Heart right ventricle (tissue), 16 donors: ENCODE measurements at regions of chr16 and their contacts with region 1.

Region 1: GRCh38 chr16:88662843-88663606 is at the start of gene MVD:
- DNase-seq: peak; percentile 97
- ATAC-seq: peak; percentile 98 to 100 (median 99)
- H3K4me3 ChIP-seq: peak within 1 kb of the TSS; percentile 68 to 99 (median 90)
- H3K27ac ChIP-seq: peak within 1 kb of the TSS; percentile 59 to 93 (median 88)
- H3K4me1 ChIP-seq: peaks cover 2 to 45% (median 30%) of the 10 kb centered on the region in 9 donors
- H3K27me3 ChIP-seq: no peaks in the 10 kb centered on the region
- CTCF ChIP-seq: peak in 3 of 9 donors; percentile 11 to 17 (median 17)
- total RNA-seq, gene MVD: 15.5 to 25.5 (median 20.2) TPM

Region 2: GRCh38 chr16:88591577-88592021 is 71.4 kb before region 1 on chr16:
- intact Hi-C with region 1: loop called in 1 of 10 experiments (anchors 10 kb)
- DNase-seq: peak in 1 of 2 donors; percentile 34
- ATAC-seq: peak in 4 of 8 donors; percentile 18 to 80 (median 34)
- H3K4me3 ChIP-seq: no peak overlapping the region
- H3K27ac ChIP-seq: peak overlapping the region in 1 of 10 donors; percentile 71
- H3K4me1 ChIP-seq: peaks cover 0 to 41% (median 23%) of the 10 kb centered on the region in 9 donors
- H3K27me3 ChIP-seq: no peaks in the 10 kb centered on the region
- CTCF ChIP-seq: no peak

Region 3: DNA sequence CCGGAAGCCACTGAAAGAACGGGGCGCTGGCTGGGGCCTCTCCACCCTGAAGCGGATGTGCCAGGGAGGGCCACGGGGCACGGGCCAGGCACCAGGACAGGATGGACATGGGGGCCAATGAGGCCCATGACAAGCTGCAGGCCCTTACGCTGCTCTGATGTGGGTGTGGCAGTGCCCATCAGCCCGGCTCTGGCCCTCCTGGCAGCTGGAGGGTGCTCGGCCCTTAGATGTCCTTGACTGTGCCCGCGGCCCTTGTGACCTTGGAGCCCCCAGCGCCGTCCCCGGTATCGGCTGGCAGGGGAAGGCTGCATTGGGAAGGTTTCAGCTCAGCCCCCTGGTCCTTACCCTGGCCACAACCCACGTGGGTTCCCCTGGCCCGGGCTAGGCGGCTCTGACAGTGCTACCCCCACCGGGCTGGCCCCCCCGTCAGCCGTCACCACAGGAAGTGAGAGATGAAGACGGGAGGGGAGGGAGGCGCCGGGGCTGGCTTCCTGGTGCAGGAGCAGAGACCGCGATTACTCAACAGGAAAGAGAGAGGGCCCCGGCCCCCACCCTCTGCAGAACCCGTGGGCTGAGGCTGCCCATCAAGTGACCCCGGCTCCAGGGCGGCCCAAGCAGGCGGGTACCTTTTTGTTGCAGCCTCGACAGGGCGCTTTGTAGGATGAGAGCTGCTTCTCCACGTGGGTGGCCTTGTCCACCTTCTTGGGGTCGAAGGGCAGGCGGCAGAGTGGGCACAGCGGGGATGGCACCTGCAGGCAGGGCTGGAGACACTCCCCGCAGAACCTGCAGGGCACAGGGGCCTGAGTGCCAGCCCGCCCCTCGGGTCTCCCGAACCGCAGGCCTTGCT is 37.8 kb after region 1 on chr16:
- intact Hi-C with region 1: loop called in 2 of 10 experiments (anchors 5 kb)
- DNase-seq: peak; percentile 91 to 95
- ATAC-seq: peak; percentile 72 to 93 (median 85)
- H3K4me3 ChIP-seq: peak overlapping the region in 9 of 10 donors; percentile 6 to 99 (median 35)
- H3K27ac ChIP-seq: peak overlapping the region; percentile 48 to 97 (median 81)
- H3K4me1 ChIP-seq: peaks cover 7 to 66% (median 53%) of the 10 kb centered on the region in 9 donors
- H3K27me3 ChIP-seq: no peaks in the 10 kb centered on the region
- CTCF ChIP-seq: no peak

Region 4: DNA sequence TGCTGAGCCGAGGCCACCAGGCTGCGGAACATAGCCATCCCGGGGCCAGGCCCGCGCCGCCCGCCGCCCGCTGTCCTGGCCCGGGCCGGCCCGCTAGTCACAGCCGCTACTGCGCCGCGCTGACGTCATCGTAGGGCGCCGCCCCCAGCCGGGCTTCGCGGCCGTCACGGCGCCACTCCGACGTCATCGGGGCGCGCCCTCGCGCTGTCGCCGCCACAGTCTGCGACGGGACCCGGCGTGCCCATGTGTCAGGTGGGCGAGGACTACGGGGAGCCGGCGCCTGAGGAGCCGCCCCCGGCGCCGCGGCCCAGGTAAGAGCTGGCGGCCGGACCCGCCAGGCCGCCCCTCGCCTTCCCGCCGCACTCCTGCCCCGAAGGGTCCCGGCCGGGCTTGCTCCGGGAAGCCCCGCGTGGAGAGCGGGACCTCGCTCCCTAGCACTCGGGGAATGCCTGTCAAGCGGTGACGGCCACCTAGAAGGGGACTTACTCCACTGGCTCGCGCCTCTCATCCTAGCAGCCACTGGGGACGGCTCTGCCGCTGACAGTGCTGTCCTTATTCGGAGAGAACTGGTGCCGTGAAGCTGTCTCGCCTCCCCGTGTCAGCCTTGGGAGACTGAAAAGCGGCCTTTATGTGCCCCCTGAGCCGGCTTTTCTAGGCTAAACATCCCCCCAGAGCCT is 43.4 kb after region 1 on chr16 and contains the starts of genes CTU2 and RNF166:
- intact Hi-C with region 1: loop called in 2 of 10 experiments (anchors 5 kb)
- DNase-seq: peak; percentile 91 to 94
- ATAC-seq: peak; percentile 79 to 90 (median 86)
- H3K4me3 ChIP-seq: peak within 1 kb of the TSS; percentile 76 to 100 (median 99)
- H3K27ac ChIP-seq: peak within 1 kb of the TSS; percentile 62 to 97 (median 84)
- H3K4me1 ChIP-seq: peaks cover 14 to 61% (median 50%) of the 10 kb centered on the region in 9 donors
- H3K27me3 ChIP-seq: no peaks in the 10 kb centered on the region
- CTCF ChIP-seq: no peak
- total RNA-seq, gene CTU2: 11.8 to 17.3 (median 13.2) TPM
- total RNA-seq, gene RNF166: 11.8 to 19.1 (median 14.3) TPM

Region 5: GRCh38 chr16:88770461-88771293 is 107.7 kb after region 1 on chr16:
- intact Hi-C with region 1: no loop called
- DNase-seq: peak; percentile 70 to 74
- ATAC-seq: peak in 7 of 8 donors; percentile 14 to 51 (median 23)
- H3K4me3 ChIP-seq: peak overlapping the region in 4 of 10 donors; percentile 9 to 24 (median 15)
- H3K27ac ChIP-seq: peak overlapping the region in 2 of 10 donors; percentile 16 to 32
- H3K4me1 ChIP-seq: peaks cover 33 to 84% (median 74%) of the 10 kb centered on the region in 9 donors
- H3K27me3 ChIP-seq: no peaks in the 10 kb centered on the region
- CTCF ChIP-seq: no peak